SK-MEL-5 (cell line): ENCODE measurements at regions of chr13 and their contacts with region 1.

Region 1: GRCh38 chr13:67224148-67224846 is 5.8 kb downstream of the PCDH9 start:
- DNase-seq: peak; percentile 85

Region 2: GRCh38 chr13:67061750-67062149 is 162.5 kb before region 1 on chr13:
- in situ Hi-C with region 1: no loop called
- DNase-seq: no peak

Region 3: GRCh38 chr13:67119481-67119883 is 104.8 kb before region 1 on chr13:
- in situ Hi-C with region 1: loop called (anchors 25 kb)
- DNase-seq: peak; percentile 45